Calu3 (cell line): ENCODE measurements at regions of chr5 and their contacts with region 1.

Region 1: DNA sequence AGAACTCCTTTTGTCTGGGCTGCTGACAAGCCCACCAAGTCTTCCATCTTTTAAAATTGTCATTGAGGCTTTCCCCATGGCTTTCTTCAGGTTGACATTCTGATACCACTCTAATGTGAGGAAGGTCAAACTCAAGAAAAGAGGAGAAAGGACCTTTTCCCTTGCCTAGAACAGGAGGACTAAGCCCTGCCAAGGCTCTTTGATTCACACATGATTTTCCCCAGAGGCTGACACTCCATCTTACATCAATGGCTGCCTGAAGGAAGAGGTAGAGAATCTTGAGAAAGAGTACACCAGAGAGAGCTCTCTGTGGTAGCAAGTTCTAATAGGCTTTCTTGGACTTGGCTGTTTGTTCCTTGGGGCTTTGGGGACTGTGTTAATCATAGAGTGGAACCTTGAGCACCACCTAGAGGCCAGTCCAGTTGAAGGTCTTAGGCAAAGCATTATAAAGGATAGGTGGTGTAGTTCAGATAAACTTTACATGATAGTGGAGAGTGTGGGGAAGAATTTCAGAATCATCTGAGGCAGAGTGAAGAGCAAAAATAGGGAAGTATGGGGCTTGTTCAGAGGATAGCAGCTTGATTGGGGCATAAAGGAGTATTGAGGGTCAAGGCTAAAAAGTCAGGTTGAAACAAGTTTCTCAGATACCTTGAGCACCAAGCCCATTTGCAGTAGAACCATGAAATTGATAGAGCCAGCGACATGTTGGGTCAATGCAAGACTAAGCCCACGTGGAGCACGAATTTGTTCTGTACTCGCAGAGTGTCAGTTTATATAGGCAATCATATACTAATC is 36.7 kb downstream of the NDFIP1 start:
- DNase-seq: peak; percentile 78
- H3K4me3 Mint-ChIP-seq: no peak overlapping the region
- H3K27ac Mint-ChIP-seq: no peak overlapping the region
- H3K4me1 Mint-ChIP-seq: no peaks in the 10 kb centered on the region
- H3K27me3 Mint-ChIP-seq: no peaks in the 10 kb centered on the region
- CTCF ChIP-seq: peak; percentile 70

Region 2: GRCh38 chr5:141664732-141665461 is 480.4 kb before region 1 on chr5:
- CTCF ChIA-PET with region 1: no interaction called
- intact Hi-C with region 1: loop called (anchors 2 kb)
- DNase-seq: peak; percentile 88
- H3K4me3 Mint-ChIP-seq: no peak overlapping the region
- H3K27ac Mint-ChIP-seq: no peak overlapping the region
- H3K4me1 Mint-ChIP-seq: no peaks in the 10 kb centered on the region
- H3K27me3 Mint-ChIP-seq: no peaks in the 10 kb centered on the region
- CTCF ChIP-seq: peak; percentile 95

Region 3: DNA sequence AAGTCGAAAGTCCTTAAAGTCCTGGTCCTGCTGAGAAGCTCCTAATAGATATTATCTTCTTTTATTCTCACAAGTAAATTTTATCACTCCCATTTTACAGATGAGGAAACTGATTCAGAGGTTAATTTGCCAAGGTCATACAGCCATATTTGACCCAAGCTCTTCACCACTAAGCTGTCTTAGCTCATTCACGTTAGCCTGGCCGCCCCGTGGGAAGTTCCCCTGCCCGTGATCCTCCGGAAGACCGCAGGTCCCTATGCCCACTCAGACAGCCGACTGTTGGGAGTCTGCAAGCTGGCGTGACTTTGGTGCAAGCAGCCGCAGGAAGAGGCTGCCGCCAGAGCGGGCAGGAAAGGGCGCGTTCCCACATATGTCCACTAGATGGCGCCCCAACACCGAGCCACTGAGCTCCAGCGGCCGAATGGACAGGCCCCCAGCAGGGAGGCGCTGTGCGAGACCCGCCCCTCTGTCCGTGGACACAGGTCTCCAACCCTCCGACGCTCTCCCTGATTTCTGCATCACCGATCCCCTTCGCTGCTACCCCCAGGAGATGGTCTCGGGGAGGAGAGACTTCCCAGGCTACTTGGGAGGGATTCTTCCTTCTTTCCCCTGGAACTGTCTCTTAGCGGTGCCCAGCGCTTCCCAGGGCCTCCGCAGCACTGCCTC is 453.3 kb before region 1 on chr5:
- CTCF ChIA-PET with region 1: interaction called, 3 read pairs
- intact Hi-C with region 1: loop called (anchors 5 kb)
- DNase-seq: peak; percentile 95
- H3K4me3 Mint-ChIP-seq: peak overlapping the region; percentile 69
- H3K27ac Mint-ChIP-seq: no peak overlapping the region
- H3K4me1 Mint-ChIP-seq: peaks cover 35% of the 10 kb centered on the region
- H3K27me3 Mint-ChIP-seq: peaks cover 47% of the 10 kb centered on the region
- CTCF ChIP-seq: peak; percentile 97

Region 4: GRCh38 chr5:141800617-141801016 is 344.7 kb before region 1 on chr5:
- CTCF ChIA-PET with region 1: no interaction called
- intact Hi-C with region 1: no loop called
- DNase-seq: no peak
- H3K4me3 Mint-ChIP-seq: no peak overlapping the region
- H3K27ac Mint-ChIP-seq: no peak overlapping the region
- H3K4me1 Mint-ChIP-seq: no peaks in the 10 kb centered on the region
- H3K27me3 Mint-ChIP-seq: peaks cover 34% of the 10 kb centered on the region
- CTCF ChIP-seq: no peak

Region 5: DNA sequence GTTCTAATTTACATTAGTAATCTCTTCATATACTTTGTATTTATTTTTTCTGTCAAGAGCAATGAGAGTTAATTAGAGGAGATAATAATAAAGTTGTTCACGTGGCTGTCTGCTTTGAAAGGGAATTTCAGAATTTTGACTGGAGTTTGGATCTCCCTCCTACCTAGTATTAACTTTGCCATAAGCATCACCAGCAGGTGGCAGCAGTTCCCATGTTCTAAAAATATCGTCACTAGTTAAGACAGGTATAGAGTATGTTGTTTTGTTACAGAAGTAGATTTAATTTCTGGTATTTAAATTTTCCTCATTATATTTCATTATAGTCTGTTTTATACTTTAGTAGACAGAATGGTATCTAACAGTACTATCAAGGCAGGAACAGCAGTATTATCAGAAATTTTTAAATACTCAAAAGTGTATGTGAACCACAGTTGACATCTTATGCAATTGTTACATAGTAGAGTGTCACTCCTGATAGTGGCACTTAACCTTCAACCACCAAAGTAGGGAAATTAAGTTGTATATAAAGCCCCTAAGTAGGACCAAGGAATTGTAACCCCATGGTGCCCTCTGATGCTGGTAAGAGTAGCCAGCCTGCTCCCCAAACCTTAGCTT is 152.8 kb before region 1 on chr5:
- CTCF ChIA-PET with region 1: interaction called, 12 read pairs
- intact Hi-C with region 1: loop called (anchors 1 kb)
- DNase-seq: peak; percentile 79
- H3K4me3 Mint-ChIP-seq: no peak overlapping the region
- H3K27ac Mint-ChIP-seq: no peak overlapping the region
- H3K4me1 Mint-ChIP-seq: no peaks in the 10 kb centered on the region
- H3K27me3 Mint-ChIP-seq: no peaks in the 10 kb centered on the region
- CTCF ChIP-seq: peak; percentile 72

Region 6: GRCh38 chr5:142012792-142013388 is 132.4 kb before region 1 on chr5 and contains the start of gene GNPDA1:
- CTCF ChIA-PET with region 1: interaction called, 13 read pairs
- intact Hi-C with region 1: loop called (anchors 1 kb)
- DNase-seq: peak; percentile 89
- H3K4me3 Mint-ChIP-seq: peak within 1 kb of the TSS; percentile 80
- H3K27ac Mint-ChIP-seq: peak within 1 kb of the TSS; percentile 96
- H3K4me1 Mint-ChIP-seq: peaks cover 36% of the 10 kb centered on the region
- H3K27me3 Mint-ChIP-seq: no peaks in the 10 kb centered on the region
- CTCF ChIP-seq: no peak
- total RNA-seq, gene GNPDA1: 53.2 and 54.0 TPM in 2 replicates

Region 7: DNA sequence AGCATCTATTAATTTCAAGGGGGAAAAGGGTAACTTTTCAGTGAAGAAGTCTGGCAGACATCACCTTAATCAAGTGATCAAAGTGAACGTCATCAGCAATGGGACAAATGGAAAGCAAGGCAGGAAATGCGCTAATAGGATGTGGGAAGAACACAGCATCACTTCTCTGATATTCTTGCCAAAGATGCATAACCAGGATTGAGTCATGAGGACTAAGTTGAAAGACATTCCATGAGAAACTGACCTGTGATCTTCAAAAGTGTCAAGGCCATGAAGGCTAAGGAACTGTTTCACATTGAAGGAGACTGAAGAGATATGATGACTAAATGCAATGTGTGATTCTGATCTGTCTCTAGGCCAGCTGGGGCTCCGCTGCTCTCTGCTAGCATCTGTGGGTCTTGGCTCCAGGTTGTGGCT is 56.2 kb after region 1 on chr5:
- CTCF ChIA-PET with region 1: no interaction called
- intact Hi-C with region 1: no loop called
- DNase-seq: no peak
- H3K4me3 Mint-ChIP-seq: no peak overlapping the region
- H3K27ac Mint-ChIP-seq: no peak overlapping the region
- H3K4me1 Mint-ChIP-seq: no peaks in the 10 kb centered on the region
- H3K27me3 Mint-ChIP-seq: peaks cover 63% of the 10 kb centered on the region
- CTCF ChIP-seq: no peak

Region 8: GRCh38 chr5:142263346-142263745 is 118.0 kb after region 1 on chr5:
- CTCF ChIA-PET with region 1: no interaction called
- intact Hi-C with region 1: no loop called
- DNase-seq: no peak
- H3K4me3 Mint-ChIP-seq: no peak overlapping the region
- H3K27ac Mint-ChIP-seq: no peak overlapping the region
- H3K4me1 Mint-ChIP-seq: no peaks in the 10 kb centered on the region
- H3K27me3 Mint-ChIP-seq: no peaks in the 10 kb centered on the region
- CTCF ChIP-seq: no peak